Gastrocnemius medialis (tissue), 4 donors: ENCODE measurements at regions of chr1 and their contacts with region 1.

Region 1: DNA sequence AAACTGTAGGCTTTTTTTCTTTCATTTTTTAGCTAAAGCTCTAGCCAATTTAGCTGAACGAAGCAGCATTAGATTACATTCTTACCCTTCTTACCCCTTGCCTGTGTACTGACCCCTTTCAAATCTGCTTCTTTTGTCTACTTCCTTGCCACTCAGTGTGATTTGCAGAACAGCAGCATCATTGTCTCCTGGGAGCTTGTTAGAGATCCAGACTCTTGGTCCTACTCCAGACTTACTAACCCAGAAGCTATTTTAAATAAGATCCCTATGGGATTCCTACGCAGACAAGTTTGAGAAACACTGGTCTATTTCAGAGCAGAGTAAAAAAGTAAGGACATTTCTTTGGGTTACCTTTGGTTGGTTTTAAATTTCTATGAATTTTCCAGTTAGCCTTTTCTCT is 13.8 kb downstream of the LRRC39 start:
- DNase-seq: no peak
- ATAC-seq: peak; percentile 52 to 82
- H3K4me3 ChIP-seq: no peak overlapping the region
- H3K27ac ChIP-seq: peak overlapping the region; percentile 28 to 69 (median 49)
- H3K4me1 ChIP-seq: peaks cover 11 to 17% of the 10 kb centered on the region in 2 donors
- H3K27me3 ChIP-seq: no peaks in the 10 kb centered on the region
- CTCF ChIP-seq: no peak
- POLR2A ChIP-seq: no peak

Region 2: DNA sequence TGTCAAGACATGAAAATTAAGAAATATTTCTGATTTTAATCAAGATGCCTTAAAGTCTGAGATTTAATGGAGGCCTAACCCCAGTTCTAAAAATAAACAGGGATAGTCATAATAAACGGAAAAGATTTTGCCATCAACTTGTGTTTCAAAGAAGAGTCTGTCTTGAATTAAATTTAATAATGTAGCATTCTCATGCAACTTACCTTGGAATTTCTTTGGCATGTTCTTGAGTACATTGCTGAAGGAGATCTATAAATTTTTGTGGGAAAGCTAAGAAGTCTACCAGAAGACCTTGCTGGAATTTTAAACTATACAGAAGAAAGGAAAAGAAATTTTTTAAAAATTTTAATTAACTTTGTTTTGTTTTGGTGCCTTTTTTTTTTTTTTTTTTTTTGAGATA is 42.0 kb before region 1 on chr1:
- in situ Hi-C with region 1: no loop called
- intact Hi-C with region 1: no loop called
- DNase-seq: no peak
- ATAC-seq: no peak
- H3K4me3 ChIP-seq: no peak overlapping the region
- H3K27ac ChIP-seq: no peak overlapping the region
- H3K4me1 ChIP-seq: no peaks in the 10 kb centered on the region
- H3K27me3 ChIP-seq: no peaks in the 10 kb centered on the region
- CTCF ChIP-seq: no peak
- POLR2A ChIP-seq: no peak

Region 3: GRCh38 chr1:100178091-100178490 is 13.9 kb after region 1 on chr1 and contains the start of gene LRRC39:
- in situ Hi-C with region 1: no loop called
- intact Hi-C with region 1: loop called (anchors 1 kb)
- DNase-seq: no peak
- ATAC-seq: peak; percentile 94 to 98
- H3K4me3 ChIP-seq: peak within 1 kb of the TSS; percentile 46 to 55 (median 50)
- H3K27ac ChIP-seq: peak within 1 kb of the TSS; percentile 76 to 89 (median 82)
- H3K4me1 ChIP-seq: peaks cover 6 to 17% of the 10 kb centered on the region in 2 donors
- H3K27me3 ChIP-seq: no peaks in the 10 kb centered on the region
- CTCF ChIP-seq: no peak
- POLR2A ChIP-seq: peak in 1 of 2 donors; percentile 41
- total RNA-seq, gene LRRC39: 23.4 to 73.2 (median 42.1) TPM

Region 4: DNA sequence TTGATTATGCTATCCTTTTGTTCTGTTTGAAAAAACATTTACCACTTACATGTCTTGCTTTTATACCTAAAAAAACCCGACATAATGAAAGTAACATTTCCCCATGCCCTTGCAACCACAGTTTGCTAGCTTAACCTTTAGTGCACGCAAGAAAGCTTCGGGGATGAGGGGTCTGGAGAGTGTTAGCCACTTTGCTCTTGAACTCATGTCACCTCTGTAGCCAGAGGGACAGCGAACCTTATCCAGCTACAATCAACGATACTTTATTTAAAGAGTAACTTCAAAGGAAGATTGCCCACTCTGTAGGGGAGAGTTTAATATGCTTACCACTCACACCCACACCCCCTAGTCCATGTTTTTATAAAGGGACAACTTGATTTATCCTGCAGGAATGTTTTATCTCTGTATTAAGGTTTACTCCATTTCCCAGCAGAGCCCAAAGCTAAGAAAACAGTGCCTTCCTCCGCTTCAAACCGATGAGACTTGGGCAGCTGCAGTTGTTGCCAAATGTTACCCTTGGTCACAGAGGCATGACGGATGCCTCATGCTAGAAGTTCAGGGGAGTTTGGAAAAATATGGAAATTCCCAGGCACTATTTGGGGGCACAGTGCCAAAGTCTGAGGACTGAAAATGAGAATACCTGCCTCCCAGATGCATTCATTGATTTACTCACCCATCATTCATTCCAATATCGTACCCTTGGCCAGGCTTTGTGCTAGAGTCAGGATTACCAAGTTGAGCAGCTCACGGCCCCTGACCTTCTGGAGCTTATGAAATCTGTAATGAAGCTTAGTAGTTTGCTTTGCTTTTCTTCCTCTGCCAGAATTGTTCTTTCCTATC is 493.9 kb after region 1 on chr1:
- in situ Hi-C with region 1: no loop called
- intact Hi-C with region 1: no loop called
- DNase-seq: no peak
- ATAC-seq: no peak
- H3K4me3 ChIP-seq: no peak overlapping the region
- H3K27ac ChIP-seq: no peak overlapping the region
- H3K4me1 ChIP-seq: no peaks in the 10 kb centered on the region
- H3K27me3 ChIP-seq: no peaks in the 10 kb centered on the region
- CTCF ChIP-seq: no peak
- POLR2A ChIP-seq: no peak